Heart right ventricle (tissue), 16 donors: ENCODE measurements at regions of chr10 and their contacts with region 1.

Region 1: DNA sequence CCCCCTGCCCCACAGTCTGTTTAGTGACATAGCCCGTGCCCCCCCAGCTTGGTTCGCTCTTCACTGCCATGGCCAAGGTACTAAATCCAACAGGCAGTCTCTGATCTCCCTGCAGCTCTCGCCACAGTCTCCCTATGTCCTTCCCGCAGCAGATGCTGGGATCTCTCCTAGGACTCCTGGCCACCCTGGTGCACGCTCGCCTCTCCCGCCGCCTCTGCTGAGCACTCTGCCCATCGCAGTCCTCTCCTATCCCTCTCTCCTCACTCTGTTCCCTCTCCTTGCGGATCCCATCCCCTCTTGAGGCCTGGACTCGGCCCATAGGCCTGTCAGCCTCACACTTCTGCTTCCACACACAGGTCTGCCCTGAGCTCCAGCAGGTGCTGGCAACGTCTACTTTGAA is 204.8 kb upstream of the TCERG1L start:
- DNase-seq: no peak
- ATAC-seq: no peak
- H3K4me3 ChIP-seq: no peak overlapping the region
- H3K27ac ChIP-seq: no peak overlapping the region
- H3K4me1 ChIP-seq: no peaks in the 10 kb centered on the region
- H3K27me3 ChIP-seq: peaks cover 0 to 36% (median 6%) of the 10 kb centered on the region in 7 donors
- CTCF ChIP-seq: no peak

Region 2: GRCh38 chr10:131532745-131533341 is 16.6 kb after region 1 on chr10:
- intact Hi-C with region 1: loop called in 1 of 10 experiments (anchors 2 kb)
- DNase-seq: no peak
- ATAC-seq: no peak
- H3K4me3 ChIP-seq: no peak overlapping the region
- H3K27ac ChIP-seq: no peak overlapping the region
- H3K4me1 ChIP-seq: no peaks in the 10 kb centered on the region
- H3K27me3 ChIP-seq: peaks cover 0 to 13% (median 5%) of the 10 kb centered on the region in 7 donors
- CTCF ChIP-seq: no peak